Thyroid gland (tissue), 4 donors: ENCODE measurements at regions of chr6 and their contacts with region 1.

Region 1: DNA sequence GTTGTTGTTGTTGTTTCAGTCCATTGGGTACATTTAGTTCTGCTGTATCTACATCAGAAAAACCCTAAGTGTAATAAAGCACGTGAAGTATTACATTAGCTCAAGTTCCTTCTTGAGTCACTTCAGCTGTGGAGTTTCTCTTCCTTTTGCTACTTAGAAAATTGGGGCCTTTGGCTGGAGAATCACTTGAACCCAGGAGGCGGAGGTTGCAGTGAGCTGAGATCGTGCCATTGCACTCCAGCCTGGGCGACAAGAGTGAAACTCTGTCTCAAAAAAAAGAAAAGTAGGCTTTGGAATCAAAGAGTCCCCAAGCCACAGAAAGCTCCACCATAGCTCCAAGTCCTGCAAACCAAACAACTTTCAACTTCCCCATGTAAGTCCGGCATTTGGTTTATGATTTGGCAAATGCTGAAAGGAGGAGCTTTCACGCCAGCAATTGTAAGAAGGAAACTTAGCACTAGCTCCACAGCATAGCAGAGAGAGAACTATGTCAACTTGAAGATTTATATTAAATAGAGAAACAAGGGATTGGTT is 56.5 kb upstream of the RNF144B start:
- DNase-seq: no peak
- H3K4me3 ChIP-seq: no peak overlapping the region
- H3K27ac ChIP-seq: peak overlapping the region; percentile 83 to 90 (median 84)
- H3K4me1 ChIP-seq: peaks cover 27 to 40% of the 10 kb centered on the region in 2 donors
- H3K27me3 ChIP-seq: no peaks in the 10 kb centered on the region
- CTCF ChIP-seq: no peak
- POLR2A ChIP-seq: no peak

Region 2: DNA sequence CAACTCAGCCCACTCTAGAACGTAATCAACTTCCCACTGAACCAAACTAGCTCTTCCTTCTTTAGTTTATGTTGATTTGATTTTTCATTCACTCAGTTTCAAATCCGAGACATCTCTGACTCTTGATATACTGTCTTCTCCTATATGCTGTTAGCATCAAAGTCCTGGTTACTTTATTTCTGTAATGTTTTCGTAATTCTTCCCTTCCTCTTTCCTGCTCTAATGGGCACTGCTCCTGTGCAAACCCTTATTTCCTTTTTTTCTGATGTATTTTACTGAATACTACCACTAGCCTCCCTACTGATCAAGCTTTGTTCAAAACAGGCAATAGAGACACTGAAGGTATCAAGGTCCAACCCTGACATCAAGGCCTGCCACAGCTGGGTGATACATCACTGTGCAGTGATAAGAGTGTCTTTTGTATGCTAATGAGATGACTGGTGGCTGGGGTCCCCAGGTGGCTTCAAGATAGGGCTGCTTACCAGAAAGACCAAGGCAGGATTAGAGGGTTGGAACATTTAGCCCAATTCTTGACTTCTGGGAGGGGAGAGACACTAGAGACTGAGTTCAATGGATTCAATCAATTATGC is 438.4 kb before region 1 on chr6:
- intact Hi-C with region 1: no loop called
- DNase-seq: no peak
- H3K4me3 ChIP-seq: no peak overlapping the region
- H3K27ac ChIP-seq: no peak overlapping the region
- H3K4me1 ChIP-seq: no peaks in the 10 kb centered on the region
- H3K27me3 ChIP-seq: no peaks in the 10 kb centered on the region
- CTCF ChIP-seq: no peak
- POLR2A ChIP-seq: no peak

Region 3: GRCh38 chr6:18387061-18387721 is 56.6 kb after region 1 on chr6 and contains the start of gene RNF144B:
- intact Hi-C with region 1: loop called (anchors 10 kb)
- DNase-seq: peak; percentile 94 to 95
- H3K4me3 ChIP-seq: peak within 1 kb of the TSS; percentile 47 to 78 (median 53)
- H3K27ac ChIP-seq: peak within 1 kb of the TSS; percentile 84 to 94 (median 86)
- H3K4me1 ChIP-seq: peaks cover 29 to 36% of the 10 kb centered on the region in 2 donors
- H3K27me3 ChIP-seq: no peaks in the 10 kb centered on the region
- CTCF ChIP-seq: peak in 1 of 6 experiments; percentile 28
- POLR2A ChIP-seq: peak; percentile 81 to 99
- total RNA-seq, gene RNF144B: 67.3 to 143 (median 114) TPM

Region 4: DNA sequence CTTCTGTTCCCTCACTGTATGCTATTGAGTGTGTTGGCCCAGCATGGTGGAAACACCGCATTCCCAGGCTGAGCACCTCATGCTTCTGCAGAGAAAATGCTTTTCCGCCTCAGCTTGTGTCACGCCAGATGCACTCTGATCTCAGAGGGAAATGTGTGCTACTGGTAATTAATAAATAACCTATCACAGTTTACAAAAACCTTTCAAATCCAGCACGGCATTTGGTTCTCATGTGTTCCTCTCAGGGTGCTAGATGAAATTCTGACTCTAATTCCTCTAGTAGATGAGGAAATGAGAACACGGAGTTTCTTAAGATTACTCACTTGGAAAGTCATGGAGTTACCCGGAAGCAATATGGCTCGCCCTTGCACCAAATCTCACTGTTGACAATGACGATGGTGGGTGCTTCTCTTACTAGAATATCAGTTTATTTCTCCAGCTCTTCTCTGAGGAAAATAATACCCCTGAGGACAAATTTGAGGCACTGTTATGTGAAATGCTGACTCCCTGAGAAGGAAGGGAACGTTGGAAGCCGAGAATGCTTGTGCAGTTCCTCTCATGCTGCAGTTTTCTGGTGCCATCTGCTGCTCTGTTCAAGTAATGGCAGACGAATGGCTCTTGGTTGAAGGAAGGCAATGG is 173.1 kb after region 1 on chr6:
- intact Hi-C with region 1: no loop called
- DNase-seq: peak; percentile 69 to 70
- H3K4me3 ChIP-seq: no peak overlapping the region
- H3K27ac ChIP-seq: peak overlapping the region; percentile 6 to 70 (median 60)
- H3K4me1 ChIP-seq: peaks cover 8 to 13% of the 10 kb centered on the region in 2 donors
- H3K27me3 ChIP-seq: no peaks in the 10 kb centered on the region
- CTCF ChIP-seq: peak; percentile 67 to 99 (median 92)
- POLR2A ChIP-seq: no peak